Activated naive CD4-positive, alpha-beta T cell treated with anti-CD3 and anti-CD28 coated beads for 36 hours (primary cell): ENCODE measurements at regions of chr1 and their contacts with region 1.

Region 1: DNA sequence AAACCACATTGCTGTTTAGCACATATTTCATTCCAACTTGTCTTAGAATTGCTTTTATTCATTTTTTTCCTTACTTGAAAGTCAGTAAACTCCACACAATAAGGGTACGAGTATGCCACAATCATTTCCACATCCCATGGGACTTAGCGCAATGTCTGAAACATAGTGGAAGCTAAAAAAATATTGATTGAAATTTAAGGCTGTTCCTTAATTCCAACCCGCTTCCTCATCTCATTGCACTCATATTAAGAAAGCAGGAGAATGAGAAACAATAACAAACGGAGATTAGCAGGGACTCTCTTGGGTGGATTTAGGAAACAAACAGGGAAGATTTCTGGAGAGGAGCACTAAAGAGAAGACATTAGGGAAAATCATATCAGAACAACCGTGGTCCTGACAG is 39.3 kb upstream of the RGS4 start:
- DNase-seq: no peak
- H3K4me3 Mint-ChIP-seq: no peak overlapping the region
- H3K27ac Mint-ChIP-seq: no peak overlapping the region
- H3K4me1 Mint-ChIP-seq: no peaks in the 10 kb centered on the region
- H3K27me3 Mint-ChIP-seq: peaks cover 11% of the 10 kb centered on the region

Region 2: GRCh38 chr1:163046071-163046470 is 16.2 kb after region 1 on chr1:
- CTCF ChIA-PET with region 1: no interaction called
- intact Hi-C with region 1: loop called (anchors 1 kb)
- DNase-seq: no peak
- H3K4me3 Mint-ChIP-seq: no peak overlapping the region
- H3K27ac Mint-ChIP-seq: no peak overlapping the region
- H3K4me1 Mint-ChIP-seq: no peaks in the 10 kb centered on the region
- H3K27me3 Mint-ChIP-seq: peaks cover 15% of the 10 kb centered on the region

Region 3: DNA sequence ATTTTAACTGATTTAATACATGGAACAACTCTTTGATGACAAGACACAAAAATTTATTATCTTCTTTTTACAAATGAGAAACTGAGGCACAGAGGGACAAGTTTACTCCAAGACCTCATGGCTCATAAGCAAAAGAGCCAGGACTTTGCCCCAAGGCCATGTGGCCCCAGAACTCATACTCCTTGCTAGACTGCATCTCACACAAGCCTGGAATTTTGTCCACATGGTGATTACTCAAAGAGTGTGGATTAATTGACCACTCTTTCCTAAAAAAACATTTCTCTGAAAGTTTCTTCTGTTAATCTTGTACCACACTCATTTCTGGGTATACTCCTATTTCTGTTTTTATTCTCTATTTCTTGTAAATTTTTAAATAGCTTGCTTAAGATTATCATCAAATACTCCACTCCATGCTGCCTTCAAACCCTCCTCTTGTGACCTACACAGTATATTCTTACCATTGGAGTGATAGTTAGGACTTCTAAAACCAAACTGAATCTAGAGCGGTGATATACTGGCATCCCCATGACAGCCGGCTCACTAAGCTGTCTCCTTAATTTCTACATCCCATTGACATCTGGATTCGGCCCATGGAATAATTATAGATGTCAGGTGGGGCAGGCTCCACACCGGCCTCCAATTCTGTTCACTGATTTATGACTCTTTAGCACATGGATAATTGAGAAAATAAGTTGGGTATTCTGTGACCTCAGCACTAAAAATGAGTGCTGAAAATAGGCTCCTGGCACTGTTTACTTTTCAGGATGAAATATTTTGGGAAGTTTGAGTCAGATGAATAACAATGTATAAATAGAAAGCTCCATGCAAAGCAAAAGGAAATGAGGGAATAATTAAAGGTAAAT is 55.4 kb after region 1 on chr1:
- CTCF ChIA-PET with region 1: no interaction called
- intact Hi-C with region 1: loop called (anchors 2 kb)
- DNase-seq: no peak
- H3K4me3 Mint-ChIP-seq: no peak overlapping the region
- H3K27ac Mint-ChIP-seq: no peak overlapping the region
- H3K4me1 Mint-ChIP-seq: no peaks in the 10 kb centered on the region
- H3K27me3 Mint-ChIP-seq: no peaks in the 10 kb centered on the region